A673 (cell line): ENCODE measurements at regions of chr6 and their contacts with region 1.

Region 1: DNA sequence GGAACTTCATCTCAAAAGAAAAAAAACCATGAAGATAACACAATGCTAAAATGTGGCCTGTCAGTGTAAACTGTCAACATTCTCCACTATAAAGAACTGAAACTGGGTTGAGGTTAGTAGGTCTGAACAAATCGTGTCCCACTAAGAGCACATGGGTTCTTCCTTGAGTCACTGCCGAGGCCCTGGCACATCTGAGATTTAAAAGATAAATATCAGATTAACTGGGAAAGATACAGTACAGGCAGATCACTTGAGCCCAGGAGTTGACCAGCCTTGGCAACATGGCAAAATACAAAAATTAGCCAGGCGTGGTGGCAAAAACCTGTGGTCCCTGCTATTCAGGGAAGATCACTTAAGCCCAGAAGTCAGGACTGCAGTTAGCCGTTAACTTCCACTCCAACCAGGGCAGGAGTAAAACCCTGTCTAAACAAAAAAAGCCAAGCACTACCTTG is 5.6 kb downstream of the EEF1A1 start:
- DNase-seq: peak; percentile 40
- H3K4me3 ChIP-seq: no peak overlapping the region
- H3K27ac ChIP-seq: peak overlapping the region; percentile 25
- H3K4me1 ChIP-seq: peaks cover 21% of the 10 kb centered on the region
- H3K27me3 ChIP-seq: no peaks in the 10 kb centered on the region
- CTCF ChIP-seq: no peak

Region 2: DNA sequence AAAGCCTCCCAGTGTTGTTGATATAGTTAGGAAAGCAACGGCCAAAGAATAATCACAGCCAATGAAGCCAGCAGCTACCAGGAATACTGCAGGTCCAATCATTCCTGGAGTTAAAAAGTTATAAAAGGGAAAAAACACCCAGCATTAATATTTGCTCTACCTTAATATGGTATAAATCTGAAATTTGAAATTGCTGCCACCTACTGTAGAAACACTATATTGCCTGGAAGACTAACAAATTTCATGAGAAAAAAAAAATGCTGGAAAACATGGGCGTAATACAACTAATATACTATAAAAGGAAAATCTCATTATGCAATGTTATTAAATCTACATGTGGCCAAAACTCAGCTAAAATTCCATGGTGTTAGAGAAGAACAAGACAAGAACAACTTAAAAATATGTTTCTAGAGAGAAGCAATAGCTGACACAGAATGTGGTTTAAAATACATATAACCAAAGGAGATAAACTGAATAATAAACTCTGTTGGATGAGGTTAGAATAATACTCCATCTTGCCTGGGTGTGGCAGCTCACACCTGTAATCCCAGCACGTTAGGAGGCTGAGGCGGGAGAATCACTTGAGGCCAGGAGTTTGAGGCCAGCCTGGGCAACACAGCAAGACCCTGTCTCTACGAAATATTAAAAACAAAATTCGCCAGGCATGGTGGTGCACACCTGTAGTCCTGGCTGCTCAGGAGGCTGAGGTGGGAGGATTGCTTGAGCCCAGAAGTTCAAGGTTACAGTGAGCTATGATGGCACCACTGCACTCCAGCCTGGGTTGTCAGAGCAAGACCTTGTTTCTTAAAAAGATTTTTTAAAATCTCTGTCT is 95.4 kb after region 1 on chr6:
- CTCF ChIA-PET with region 1: interaction called, 3 read pairs
- POLR2A ChIA-PET with region 1: interaction called, 3 read pairs
- intact Hi-C with region 1: loop called (anchors 1 kb)
- DNase-seq: peak; percentile 65
- H3K4me3 ChIP-seq: no peak overlapping the region
- H3K27ac ChIP-seq: no peak overlapping the region
- H3K4me1 ChIP-seq: no peaks in the 10 kb centered on the region
- H3K27me3 ChIP-seq: no peaks in the 10 kb centered on the region
- CTCF ChIP-seq: peak; percentile 70